Common myeloid progenitor, CD34-positive (primary cell): ENCODE measurements at regions of chr9 and their contacts with region 1.

Region 1: DNA sequence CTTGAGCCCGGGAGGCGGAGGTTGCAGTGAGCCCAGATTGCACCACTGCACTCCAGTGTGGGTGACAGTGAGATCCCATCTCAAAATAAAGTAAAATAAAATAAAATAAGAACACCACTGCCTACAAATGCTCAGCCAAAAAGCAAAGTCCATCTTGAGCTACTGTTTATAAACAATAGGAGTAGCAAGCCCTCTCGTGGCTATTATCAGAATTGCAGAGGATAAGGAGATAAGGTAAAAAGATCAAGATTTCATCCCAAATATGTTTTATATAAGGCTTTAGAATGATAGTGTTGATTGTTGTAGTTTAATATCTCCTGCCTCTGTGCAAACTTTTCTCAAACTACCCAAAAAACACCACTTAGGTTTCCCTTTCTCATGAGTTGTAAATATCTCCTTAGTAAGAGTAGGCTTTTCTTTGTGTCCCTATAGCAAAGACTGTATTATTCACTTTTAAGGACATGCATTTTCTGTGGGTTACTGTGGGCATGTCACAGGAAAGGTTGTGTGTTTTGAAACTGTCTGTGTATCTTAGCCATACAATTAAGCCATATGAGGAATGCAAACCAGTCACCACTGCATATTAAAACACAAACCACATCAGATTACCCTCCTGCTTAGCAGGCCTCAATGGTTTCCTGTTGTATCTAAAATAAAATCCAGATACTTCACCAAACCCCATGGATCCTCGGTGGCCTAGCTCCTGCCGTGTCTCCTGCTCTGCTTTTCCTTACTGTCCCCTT is 31.8 kb upstream of the CKS2 start:
- DNase-seq: peak; percentile 43 to 63 (median 57)
- H3K4me3 ChIP-seq: no peak overlapping the region
- H3K27ac ChIP-seq: no peak overlapping the region
- H3K4me1 ChIP-seq: peaks cover 0 to 15% (median 10%) of the 10 kb centered on the region in 4 experiments
- H3K27me3 ChIP-seq: peaks cover 0 to 5% (median 0%) of the 10 kb centered on the region in 5 experiments

Region 2: GRCh38 chr9:89310475-89311346 is 31.5 kb after region 1 on chr9 and contains the start of gene CKS2:
- CTCF ChIA-PET with region 1: no interaction called
- POLR2A ChIA-PET with region 1: interaction called, 11 read pairs
- DNase-seq: peak; percentile 100
- H3K4me3 ChIP-seq: peak within 1 kb of the TSS; percentile 58 to 100 (median 97)
- H3K27ac ChIP-seq: peak within 1 kb of the TSS; percentile 97 to 99
- H3K4me1 ChIP-seq: peaks cover 25 to 39% (median 35%) of the 10 kb centered on the region in 4 experiments
- H3K27me3 ChIP-seq: no peaks in the 10 kb centered on the region

Region 3: GRCh38 chr9:89328064-89328463 is 48.9 kb after region 1 on chr9:
- CTCF ChIA-PET with region 1: no interaction called
- POLR2A ChIA-PET with region 1: no interaction called
- DNase-seq: no peak
- H3K4me3 ChIP-seq: no peak overlapping the region
- H3K27ac ChIP-seq: no peak overlapping the region
- H3K4me1 ChIP-seq: no peaks in the 10 kb centered on the region
- H3K27me3 ChIP-seq: no peaks in the 10 kb centered on the region